Heart right ventricle (tissue), 16 donors: ENCODE measurements at regions of chr9 and their contacts with region 1.

Region 1: DNA sequence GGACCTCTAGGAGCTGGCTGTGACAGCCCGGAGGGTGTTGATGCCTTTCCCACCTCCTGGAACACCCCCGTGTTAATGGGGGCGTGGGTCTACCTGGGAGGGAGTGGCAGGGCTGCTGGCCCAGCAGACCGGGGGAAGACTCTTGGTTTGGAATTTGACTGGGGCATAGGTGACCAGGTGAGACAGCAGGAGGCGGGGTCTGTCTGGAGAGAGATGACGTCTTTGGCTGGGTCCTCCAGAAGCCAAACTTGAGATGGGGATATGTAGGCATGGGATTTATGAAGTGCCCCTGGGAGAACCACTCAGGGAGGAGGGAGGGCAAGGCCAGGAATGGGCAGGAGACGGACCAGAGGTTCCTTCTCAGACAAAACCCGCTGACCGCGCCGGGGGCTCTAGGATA is 42.6 kb downstream of the NEK6 start:
- DNase-seq: no peak
- ATAC-seq: no peak
- H3K4me3 ChIP-seq: no peak overlapping the region
- H3K27ac ChIP-seq: no peak overlapping the region
- H3K4me1 ChIP-seq: peaks cover 21 to 47% (median 41%) of the 10 kb centered on the region in 9 donors
- H3K27me3 ChIP-seq: no peaks in the 10 kb centered on the region
- CTCF ChIP-seq: no peak

Region 2: GRCh38 chr9:124260769-124261553 is 39.4 kb before region 1 on chr9:
- intact Hi-C with region 1: loop called in 1 of 10 experiments (anchors 5 kb)
- DNase-seq: no peak
- ATAC-seq: peak in 4 of 8 donors; percentile 27 to 58 (median 30)
- H3K4me3 ChIP-seq: peak overlapping the region in 4 of 10 donors; percentile 2 to 66 (median 9)
- H3K27ac ChIP-seq: peak overlapping the region in 7 of 10 donors; percentile 10 to 93 (median 81)
- H3K4me1 ChIP-seq: peaks cover 11 to 76% (median 39%) of the 10 kb centered on the region in 9 donors
- H3K27me3 ChIP-seq: no peaks in the 10 kb centered on the region
- CTCF ChIP-seq: no peak

Region 3: GRCh38 chr9:124771021-124771866 is 470.9 kb after region 1 on chr9 and contains the start of gene NR6A1:
- intact Hi-C with region 1: no loop called
- DNase-seq: peak; percentile 96 to 97
- ATAC-seq: peak; percentile 93 to 97 (median 96)
- H3K4me3 ChIP-seq: peak within 1 kb of the TSS; percentile 83 to 98 (median 92)
- H3K27ac ChIP-seq: peak within 1 kb of the TSS in 9 of 10 donors; percentile 61 to 90 (median 72)
- H3K4me1 ChIP-seq: peaks cover 0 to 57% (median 30%) of the 10 kb centered on the region in 9 donors
- H3K27me3 ChIP-seq: peaks cover 0 to 50% (median 26%) of the 10 kb centered on the region in 7 donors
- CTCF ChIP-seq: peak in 7 of 9 donors; percentile 25 to 59 (median 43)
- total RNA-seq, gene NR6A1: 0.78 to 2.0 (median 1.2) TPM